GM10248 (cell line): ENCODE measurements at regions of chr14 and their contacts with region 1.

Region 1: GRCh38 chr14:106831322-106831720 is 1304.9 kb downstream of the TMEM121 start:
- DNase-seq: peak; percentile 54
- CTCF ChIP-seq: peak; percentile 92

Region 2: DNA sequence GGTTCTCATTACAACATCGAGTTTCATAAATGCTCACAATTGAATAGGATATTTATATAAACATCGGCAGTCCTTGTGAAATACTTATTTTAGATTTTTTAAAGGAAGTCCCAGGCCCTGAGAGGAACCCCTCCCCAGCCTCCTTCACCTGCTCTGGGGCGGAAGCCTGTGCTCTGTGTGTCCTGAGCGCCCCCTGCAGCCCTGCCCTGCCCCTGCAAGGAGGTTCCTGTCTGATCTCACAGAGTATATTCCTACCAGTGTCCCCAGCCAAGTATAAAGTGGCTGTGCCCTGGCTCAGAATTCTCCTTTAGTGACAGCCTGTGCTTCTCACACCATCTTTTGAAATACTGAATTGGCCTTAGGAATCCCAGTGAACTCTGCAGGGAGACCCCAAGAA is 645.5 kb before region 1 on chr14:
- CTCF ChIA-PET with region 1: no interaction called
- POLR2A ChIA-PET with region 1: no interaction called
- DNase-seq: no peak
- CTCF ChIP-seq: peak; percentile 41

Region 3: GRCh38 chr14:106599209-106599608 is 232.1 kb before region 1 on chr14:
- CTCF ChIA-PET with region 1: interaction called, 14 read pairs
- POLR2A ChIA-PET with region 1: no interaction called
- DNase-seq: no peak
- CTCF ChIP-seq: no peak

Region 4: GRCh38 chr14:106665814-106666213 is 165.5 kb before region 1 on chr14:
- CTCF ChIA-PET with region 1: interaction called, 17 read pairs
- POLR2A ChIA-PET with region 1: no interaction called
- DNase-seq: no peak
- CTCF ChIP-seq: peak; percentile 14

Region 5: GRCh38 chr14:106776395-106776983 is 54.8 kb before region 1 on chr14:
- CTCF ChIA-PET with region 1: interaction called, 55 read pairs
- POLR2A ChIA-PET with region 1: no interaction called
- DNase-seq: no peak
- CTCF ChIP-seq: no peak

Region 6: GRCh38 chr14:106808458-106808857 is 22.9 kb before region 1 on chr14:
- CTCF ChIA-PET with region 1: interaction called, 166 read pairs
- POLR2A ChIA-PET with region 1: interaction called, 11 read pairs
- DNase-seq: no peak
- CTCF ChIP-seq: no peak